ENCODE measurements at regions of chr17 and their contacts with region 1.

Region 1: GRCh38 chr17:28717578-28718333 is at the start of gene RAB34:
- H3K4me3 ChIP-seq: peak within 1 kb of the TSS; percentile 67
- H3K27ac ChIP-seq: peak within 1 kb of the TSS; percentile 95
- H3K4me1 ChIP-seq: peaks cover 16% of the 10 kb centered on the region
- CTCF ChIP-seq: peak; percentile 87

Region 2: DNA sequence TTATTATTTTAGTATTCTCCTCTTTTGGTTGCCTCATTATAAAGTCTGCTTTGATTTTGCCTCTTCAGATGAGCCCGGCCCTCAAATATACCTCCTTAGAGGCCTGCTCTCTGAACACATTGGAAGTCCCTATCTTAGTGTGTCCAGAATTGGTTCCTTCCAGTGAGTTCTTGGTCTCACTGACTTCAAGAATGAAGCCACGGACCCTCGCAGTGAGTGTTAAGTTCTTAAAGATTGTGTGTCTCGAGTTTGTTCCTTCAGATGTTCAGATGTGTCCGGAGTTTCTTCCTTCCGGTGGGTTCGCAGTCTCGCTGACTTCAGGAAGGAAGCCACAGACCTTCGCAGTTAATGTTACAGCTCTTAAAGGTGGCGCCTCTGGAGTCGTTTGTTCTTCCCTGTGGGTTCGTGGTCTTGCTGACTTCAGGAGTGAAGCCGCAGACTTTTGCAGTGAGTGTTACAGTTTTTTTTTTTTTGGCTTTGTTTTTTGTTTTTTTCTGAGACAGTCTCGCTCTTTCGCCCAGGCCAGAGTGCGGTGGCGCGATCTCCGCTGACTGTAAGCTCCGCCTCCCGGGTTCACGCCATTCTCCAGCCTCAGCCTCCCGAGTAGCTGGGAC is 871.6 kb before region 1 on chr17:
- CTCF ChIA-PET with region 1: no interaction called
- POLR2A ChIA-PET with region 1: no interaction called
- H3K4me3 ChIP-seq: no peak overlapping the region
- H3K27ac ChIP-seq: no peak overlapping the region
- H3K4me1 ChIP-seq: no peaks in the 10 kb centered on the region
- CTCF ChIP-seq: no peak

Region 3: GRCh38 chr17:28598799-28599310 is 118.9 kb before region 1 on chr17 and contains the start of gene SPAG5:
- CTCF ChIA-PET with region 1: no interaction called
- POLR2A ChIA-PET with region 1: interaction called, 13 read pairs
- H3K4me3 ChIP-seq: peak within 1 kb of the TSS; percentile 87
- H3K27ac ChIP-seq: peak within 1 kb of the TSS; percentile 90
- H3K4me1 ChIP-seq: no peaks in the 10 kb centered on the region
- CTCF ChIP-seq: no peak

Region 4: DNA sequence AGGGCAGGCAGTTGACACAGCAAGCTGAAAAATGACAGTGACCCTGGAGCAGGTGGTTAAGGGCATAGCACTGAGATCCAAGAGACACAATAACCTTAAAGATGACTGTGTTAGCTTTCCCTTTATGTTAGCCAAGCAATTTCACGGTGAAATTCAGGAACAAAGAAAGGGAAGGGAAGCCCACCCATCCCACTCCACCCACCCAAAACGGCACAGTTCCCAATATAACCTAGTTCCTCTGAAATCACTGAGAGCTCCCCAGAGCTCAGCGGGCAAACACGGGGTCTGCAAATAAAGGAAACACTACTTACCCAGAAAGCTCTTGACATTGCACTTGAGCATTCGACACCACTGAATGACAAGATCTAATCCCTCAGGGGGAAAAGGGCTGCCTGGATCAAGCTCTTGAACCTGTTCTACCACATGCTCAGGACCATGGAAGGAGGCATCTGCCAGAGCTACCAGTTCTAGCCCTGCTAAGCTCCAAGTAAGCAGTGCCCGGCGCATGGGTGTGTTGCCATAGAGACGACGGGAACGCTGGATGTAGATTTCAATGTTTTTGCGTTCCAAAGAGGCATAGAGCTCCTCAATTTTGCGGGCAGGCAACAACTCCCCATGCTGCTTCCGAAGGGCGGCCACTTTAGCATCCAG is 83.4 kb before region 1 on chr17:
- CTCF ChIA-PET with region 1: no interaction called
- POLR2A ChIA-PET with region 1: no interaction called
- H3K4me3 ChIP-seq: no peak overlapping the region
- H3K27ac ChIP-seq: no peak overlapping the region
- H3K4me1 ChIP-seq: no peaks in the 10 kb centered on the region
- CTCF ChIP-seq: no peak

Region 5: DNA sequence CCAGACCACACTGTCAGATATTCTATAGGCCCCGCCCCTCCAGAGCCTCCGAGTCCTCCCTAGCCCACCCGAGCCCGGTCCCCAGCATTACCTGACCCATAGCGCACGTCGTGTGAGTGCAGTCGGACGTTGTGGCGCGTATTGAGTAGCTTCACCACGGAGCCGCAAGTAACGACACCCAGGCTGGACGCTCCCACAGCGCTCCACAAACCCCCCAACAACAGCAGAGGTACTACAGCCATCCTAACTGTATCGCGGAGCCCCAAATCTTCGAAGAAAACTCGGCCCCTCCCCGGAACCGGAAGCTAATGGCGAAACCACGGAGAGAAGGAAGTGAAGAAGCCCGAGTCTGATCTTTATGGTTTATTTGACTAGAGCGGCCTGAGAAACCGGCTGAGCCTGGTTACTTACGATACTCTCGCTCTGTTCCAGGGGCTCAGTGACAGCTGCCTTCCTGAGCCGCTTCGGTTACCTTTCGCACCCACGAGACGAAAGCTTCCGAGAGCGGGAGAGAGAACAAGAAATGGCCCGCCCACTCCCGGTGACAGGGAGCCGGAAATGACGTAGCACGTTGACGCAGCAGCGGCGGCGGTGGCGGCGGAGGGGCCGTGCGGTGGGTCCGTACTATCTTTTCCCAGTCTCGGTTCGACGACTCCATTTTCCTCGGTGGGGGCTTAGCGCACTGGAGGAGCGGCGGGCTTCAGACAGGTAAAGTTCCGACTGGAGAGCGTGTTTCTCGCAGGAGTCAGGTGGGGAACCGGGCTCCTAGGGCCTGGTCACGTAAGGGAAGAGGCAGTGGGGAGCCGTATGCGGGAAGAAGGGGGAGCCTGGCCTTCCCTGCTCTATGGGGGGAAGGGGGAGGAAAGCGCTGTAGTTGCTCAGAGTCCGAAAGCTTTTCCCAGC is 55.9 kb before region 1 on chr17 and contains the starts of genes SDF2 and SUPT6H:
- CTCF ChIA-PET with region 1: interaction called, 5 read pairs
- POLR2A ChIA-PET with region 1: interaction called, 21 read pairs
- H3K4me3 ChIP-seq: peak within 1 kb of the TSS; percentile 78
- H3K27ac ChIP-seq: peak within 1 kb of the TSS; percentile 81
- H3K4me1 ChIP-seq: peaks cover 7% of the 10 kb centered on the region
- CTCF ChIP-seq: peak; percentile 8; the same call in 1 of the 2 replicates

Region 6: GRCh38 chr17:28743225-28744103 is 25.7 kb after region 1 on chr17 and contains the start of gene TRAF4:
- CTCF ChIA-PET with region 1: interaction called, 445 read pairs
- POLR2A ChIA-PET with region 1: interaction called, 64 read pairs
- H3K4me3 ChIP-seq: peak within 1 kb of the TSS; percentile 69
- H3K27ac ChIP-seq: peak within 1 kb of the TSS; percentile 94
- H3K4me1 ChIP-seq: peaks cover 11% of the 10 kb centered on the region; the same call in 1 of the 2 replicates
- CTCF ChIP-seq: 0 out of 2 replicates have a peak, but pooled peaks have one; percentile 3

Region 7: GRCh38 chr17:28750178-28751047 is 32.7 kb after region 1 on chr17:
- CTCF ChIA-PET with region 1: interaction called, 445 read pairs
- POLR2A ChIA-PET with region 1: interaction called, 64 read pairs
- H3K4me3 ChIP-seq: no peak overlapping the region
- H3K27ac ChIP-seq: 0 out of 2 replicates have a peak overlapping the region, but pooled peaks have one; percentile 12
- H3K4me1 ChIP-seq: peaks cover 8% of the 10 kb centered on the region; the same call in 1 of the 2 replicates
- CTCF ChIP-seq: peak; percentile 96

Region 8: DNA sequence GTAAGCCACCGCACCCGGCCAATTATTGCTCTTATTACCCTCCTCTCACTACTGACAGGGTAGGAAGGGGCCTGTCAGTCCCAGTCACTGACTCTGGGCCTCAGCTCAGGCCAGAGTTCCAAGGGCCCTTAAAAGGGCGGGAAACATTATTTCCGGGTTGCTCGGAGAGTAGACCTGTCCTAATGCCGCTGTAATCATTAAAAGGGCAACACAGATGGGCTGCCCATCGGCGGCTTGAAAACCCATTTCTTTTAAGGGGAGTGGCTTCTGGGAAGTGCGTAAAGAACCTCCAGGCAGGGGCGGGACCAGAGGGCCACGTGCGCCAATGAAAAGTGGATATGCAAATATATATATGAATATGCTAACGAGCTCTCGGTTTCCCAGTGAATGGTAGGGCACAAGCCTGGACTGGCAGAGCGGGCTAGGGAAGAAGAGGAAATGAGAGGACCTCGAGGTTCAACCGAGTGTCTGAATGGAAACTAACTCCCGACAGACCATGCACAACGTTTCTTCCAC is 351.8 kb after region 1 on chr17:
- CTCF ChIA-PET with region 1: no interaction called
- POLR2A ChIA-PET with region 1: no interaction called
- H3K4me3 ChIP-seq: no peak overlapping the region
- H3K27ac ChIP-seq: no peak overlapping the region
- H3K4me1 ChIP-seq: no peaks in the 10 kb centered on the region
- CTCF ChIP-seq: no peak